ENCODE measurements at regions of chr10 and their contacts with region 1.

Region 1: GRCh38 chr10:23994479-23995046 is 214.4 kb upstream of the KIAA1217 start:
- DNase-seq: peak; percentile 37
- CTCF ChIP-seq: peak; percentile 71

Region 2: GRCh38 chr10:24197263-24197662 is 202.7 kb after region 1 on chr10:
- in situ Hi-C with region 1: loop called (anchors 25 kb)
- DNase-seq: no peak
- CTCF ChIP-seq: no peak

Region 3: DNA sequence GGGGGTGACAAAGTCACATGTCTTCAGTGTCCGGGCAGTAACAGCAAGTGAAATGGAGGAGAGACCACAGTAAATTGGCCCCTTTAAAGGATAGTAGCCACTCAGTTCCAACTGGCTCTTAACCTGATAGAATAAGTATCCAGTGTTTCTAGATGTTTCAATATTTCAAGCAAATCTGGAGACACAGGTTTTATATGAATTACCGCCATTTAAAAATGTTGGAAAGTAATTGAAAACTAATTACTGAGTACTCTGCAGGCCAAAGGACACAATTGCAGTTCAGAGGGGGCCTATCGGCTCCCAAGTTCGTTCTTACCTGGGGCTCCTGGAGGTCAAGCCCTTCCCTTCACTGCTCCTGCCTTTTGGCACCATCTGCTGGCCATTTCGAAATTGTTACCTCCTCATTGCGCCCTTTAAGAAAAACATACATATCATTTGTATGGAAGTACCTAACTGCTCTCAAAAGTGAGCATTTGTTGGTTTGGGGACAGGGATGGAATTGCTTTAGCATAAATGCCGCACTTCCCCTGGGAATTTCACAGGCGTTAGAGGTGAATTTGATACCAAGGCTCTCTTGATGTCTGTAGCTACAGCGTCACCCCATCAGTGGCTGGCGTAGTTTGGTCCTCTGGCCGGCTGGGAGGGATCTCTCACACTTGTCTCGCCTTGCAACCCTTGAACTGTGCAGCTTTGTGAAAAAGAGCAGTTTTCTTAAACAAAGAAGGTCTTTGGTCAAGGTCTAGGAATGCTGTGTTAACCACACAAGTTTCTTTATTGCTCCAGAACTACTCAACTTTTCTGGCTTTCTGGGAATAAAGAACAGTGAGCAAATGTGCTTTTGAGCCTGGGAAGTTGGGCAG is 509.1 kb after region 1 on chr10:
- in situ Hi-C with region 1: loop called (anchors 25 kb)
- DNase-seq: peak; percentile 52
- CTCF ChIP-seq: peak; percentile 75